Panc1 (cell line): ENCODE measurements at regions of chr2 and their contacts with region 1.

Region 1: DNA sequence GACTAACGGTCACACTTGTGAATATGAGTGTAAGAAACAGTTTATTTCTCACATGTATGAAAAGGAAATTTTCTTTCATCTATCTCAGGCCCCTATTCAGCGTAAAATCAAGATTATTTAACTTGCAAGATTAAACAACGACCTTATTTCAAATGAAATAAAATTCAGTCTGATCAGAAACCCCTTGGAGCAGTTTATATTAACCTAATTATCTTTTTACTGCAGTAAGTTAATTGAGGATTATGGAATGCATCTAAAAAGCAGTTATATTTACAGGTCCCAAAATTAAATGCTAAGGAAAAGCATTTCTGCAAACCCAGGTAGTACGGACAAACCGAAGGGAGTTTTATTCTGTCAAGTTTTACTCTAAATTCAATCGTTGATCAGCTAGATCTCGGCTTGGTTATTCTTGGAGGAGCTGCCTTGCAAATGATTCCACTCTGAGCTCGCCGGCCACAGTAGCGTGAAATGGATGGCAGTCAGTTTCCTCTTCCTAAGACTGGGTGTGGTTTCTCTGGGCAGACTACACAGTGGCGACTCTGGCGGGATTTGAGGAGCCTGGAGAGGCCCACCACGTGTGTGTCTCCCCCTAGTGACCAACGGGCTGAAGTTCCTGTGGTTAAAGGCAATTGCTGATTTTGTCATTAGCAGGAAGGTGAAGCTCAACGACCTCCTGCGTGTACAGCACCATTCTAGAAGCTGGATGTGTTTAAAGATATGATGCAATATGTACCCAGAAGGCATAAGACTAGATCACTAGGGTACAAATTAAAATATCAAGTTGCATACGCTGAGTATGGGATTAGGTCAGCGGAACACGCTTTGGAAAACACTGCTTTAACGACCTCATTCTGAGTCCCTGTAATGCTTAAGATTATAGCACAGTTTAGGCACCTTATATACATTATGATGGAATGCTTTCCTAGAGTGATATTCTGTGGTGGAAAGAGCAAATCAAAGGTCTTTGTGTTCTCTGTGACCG is 36.4 kb downstream of the PRKRA start:
- DNase-seq: peak; percentile 89
- ATAC-seq: peak; percentile 93
- H3K4me3 ChIP-seq: peak overlapping the region; percentile 63 to 81
- H3K27ac ChIP-seq: peak overlapping the region; percentile 88
- H3K4me1 ChIP-seq: peaks cover 4% of the 10 kb centered on the region; the same call in 1 of the 2 replicates
- H3K27me3 ChIP-seq: no peaks in the 10 kb centered on the region
- CTCF ChIP-seq: peak; percentile 96

Region 2: DNA sequence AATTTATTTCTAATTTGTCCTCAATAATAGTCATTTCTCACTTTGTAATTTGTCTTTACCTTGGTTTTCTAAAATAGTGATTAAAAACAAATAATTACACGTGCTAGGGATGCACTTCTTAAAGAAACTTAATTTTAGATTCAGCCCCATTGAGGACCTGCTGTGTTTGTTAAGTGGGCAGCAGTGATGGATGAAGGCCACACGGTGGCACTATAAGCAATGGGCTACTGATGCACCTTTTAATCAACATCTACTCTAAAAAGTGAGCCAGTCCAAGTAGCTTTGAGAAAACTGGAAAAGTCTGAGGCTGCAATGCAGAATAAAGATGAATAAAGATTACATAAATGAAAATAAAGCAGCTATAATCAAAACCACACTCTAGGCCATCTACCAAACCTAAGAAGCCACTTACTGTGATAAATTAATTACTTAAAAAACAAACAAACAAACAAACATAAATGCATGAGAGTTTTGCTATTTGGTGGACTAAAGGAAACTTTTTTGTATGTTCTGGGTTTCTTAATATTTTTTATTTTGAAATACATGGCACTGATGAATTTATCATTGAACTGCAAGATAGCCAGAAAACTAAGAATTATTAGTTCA is 431.3 kb before region 1 on chr2:
- CTCF ChIA-PET with region 1: no interaction called
- POLR2A ChIA-PET with region 1: no interaction called
- in situ Hi-C with region 1: no loop called
- intact Hi-C with region 1: loop called (anchors 10 kb)
- DNase-seq: peak; percentile 33
- ATAC-seq: peak; percentile 87
- H3K4me3 ChIP-seq: no peak overlapping the region
- H3K27ac ChIP-seq: no peak overlapping the region
- H3K4me1 ChIP-seq: no peaks in the 10 kb centered on the region
- H3K27me3 ChIP-seq: no peaks in the 10 kb centered on the region
- CTCF ChIP-seq: peak; percentile 89

Region 3: GRCh38 chr2:178112202-178113152 is 302.1 kb before region 1 on chr2 and contains the start of gene RBM45:
- CTCF ChIA-PET with region 1: no interaction called
- POLR2A ChIA-PET with region 1: no interaction called
- in situ Hi-C with region 1: no loop called
- intact Hi-C with region 1: loop called (anchors 5 kb)
- DNase-seq: peak; percentile 69
- ATAC-seq: peak; percentile 100
- H3K4me3 ChIP-seq: peak within 1 kb of the TSS; percentile 92 to 93
- H3K27ac ChIP-seq: peak within 1 kb of the TSS; percentile 78
- H3K4me1 ChIP-seq: peaks cover 6% of the 10 kb centered on the region
- H3K27me3 ChIP-seq: no peaks in the 10 kb centered on the region
- CTCF ChIP-seq: peak; percentile 98
- total RNA-seq, gene RBM45: 14.1 TPM

Region 4: DNA sequence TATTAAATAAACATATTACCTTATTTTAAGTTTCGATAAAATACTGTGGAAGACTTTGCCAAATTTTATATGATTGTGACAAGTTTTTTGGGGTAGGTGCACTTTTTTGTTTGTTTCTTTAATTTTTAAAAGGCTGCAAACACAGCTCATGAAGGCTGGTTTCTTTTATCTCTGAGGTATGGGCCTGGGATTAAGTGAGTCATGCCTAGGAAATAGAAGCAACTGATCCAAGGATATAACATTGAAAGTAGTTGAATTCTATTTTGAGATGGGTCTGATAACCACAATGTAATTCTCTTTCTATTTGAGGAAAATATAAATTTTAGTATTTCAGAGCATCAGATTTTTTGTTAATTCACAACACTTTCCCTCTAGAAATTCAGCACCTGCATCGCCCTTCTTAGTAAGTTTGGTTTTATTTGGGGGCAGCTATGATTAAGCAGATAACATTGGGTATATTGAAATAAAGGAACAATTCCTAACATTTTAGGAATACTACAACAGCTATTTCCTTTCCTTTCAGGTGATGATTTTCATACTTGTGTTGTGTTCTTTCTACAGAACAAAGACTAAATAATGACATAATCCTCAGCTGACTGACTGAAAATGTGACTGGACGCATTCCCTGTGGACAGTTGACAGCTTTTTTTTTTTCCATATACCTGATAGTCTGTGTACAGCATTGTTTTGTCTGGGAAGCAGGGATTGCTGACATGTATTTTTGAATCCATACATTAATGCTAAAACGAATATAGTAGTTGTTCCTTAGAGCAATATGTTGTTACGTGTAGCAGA is 285.5 kb before region 1 on chr2:
- CTCF ChIA-PET with region 1: interaction called, 4 read pairs
- POLR2A ChIA-PET with region 1: no interaction called
- in situ Hi-C with region 1: no loop called
- intact Hi-C with region 1: loop called (anchors 5 kb)
- DNase-seq: no peak
- ATAC-seq: no peak
- H3K4me3 ChIP-seq: no peak overlapping the region
- H3K27ac ChIP-seq: no peak overlapping the region
- H3K4me1 ChIP-seq: no peaks in the 10 kb centered on the region
- H3K27me3 ChIP-seq: no peaks in the 10 kb centered on the region
- CTCF ChIP-seq: no peak

Region 5: GRCh38 chr2:178306352-178307073 is 108.0 kb before region 1 on chr2:
- CTCF ChIA-PET with region 1: no interaction called
- POLR2A ChIA-PET with region 1: no interaction called
- in situ Hi-C with region 1: no loop called
- intact Hi-C with region 1: loop called (anchors 2 kb)
- DNase-seq: peak; percentile 38
- ATAC-seq: peak; percentile 96
- H3K4me3 ChIP-seq: no peak overlapping the region
- H3K27ac ChIP-seq: no peak overlapping the region
- H3K4me1 ChIP-seq: no peaks in the 10 kb centered on the region
- H3K27me3 ChIP-seq: no peaks in the 10 kb centered on the region
- CTCF ChIP-seq: peak; percentile 85

Region 6: GRCh38 chr2:178397002-178397605 is 17.5 kb before region 1 on chr2:
- CTCF ChIA-PET with region 1: interaction called, 3 read pairs
- POLR2A ChIA-PET with region 1: no interaction called
- in situ Hi-C with region 1: no loop called
- intact Hi-C with region 1: loop called (anchors 2 kb)
- DNase-seq: peak; percentile 32
- ATAC-seq: peak; percentile 85
- H3K4me3 ChIP-seq: no peak overlapping the region
- H3K27ac ChIP-seq: no peak overlapping the region
- H3K4me1 ChIP-seq: no peaks in the 10 kb centered on the region
- H3K27me3 ChIP-seq: no peaks in the 10 kb centered on the region
- CTCF ChIP-seq: peak; percentile 74; the same call in 1 of the 2 replicates